Endothelial cell of umbilical vein (primary cell): ENCODE measurements at regions of chr2 and their contacts with region 1.

Region 1: DNA sequence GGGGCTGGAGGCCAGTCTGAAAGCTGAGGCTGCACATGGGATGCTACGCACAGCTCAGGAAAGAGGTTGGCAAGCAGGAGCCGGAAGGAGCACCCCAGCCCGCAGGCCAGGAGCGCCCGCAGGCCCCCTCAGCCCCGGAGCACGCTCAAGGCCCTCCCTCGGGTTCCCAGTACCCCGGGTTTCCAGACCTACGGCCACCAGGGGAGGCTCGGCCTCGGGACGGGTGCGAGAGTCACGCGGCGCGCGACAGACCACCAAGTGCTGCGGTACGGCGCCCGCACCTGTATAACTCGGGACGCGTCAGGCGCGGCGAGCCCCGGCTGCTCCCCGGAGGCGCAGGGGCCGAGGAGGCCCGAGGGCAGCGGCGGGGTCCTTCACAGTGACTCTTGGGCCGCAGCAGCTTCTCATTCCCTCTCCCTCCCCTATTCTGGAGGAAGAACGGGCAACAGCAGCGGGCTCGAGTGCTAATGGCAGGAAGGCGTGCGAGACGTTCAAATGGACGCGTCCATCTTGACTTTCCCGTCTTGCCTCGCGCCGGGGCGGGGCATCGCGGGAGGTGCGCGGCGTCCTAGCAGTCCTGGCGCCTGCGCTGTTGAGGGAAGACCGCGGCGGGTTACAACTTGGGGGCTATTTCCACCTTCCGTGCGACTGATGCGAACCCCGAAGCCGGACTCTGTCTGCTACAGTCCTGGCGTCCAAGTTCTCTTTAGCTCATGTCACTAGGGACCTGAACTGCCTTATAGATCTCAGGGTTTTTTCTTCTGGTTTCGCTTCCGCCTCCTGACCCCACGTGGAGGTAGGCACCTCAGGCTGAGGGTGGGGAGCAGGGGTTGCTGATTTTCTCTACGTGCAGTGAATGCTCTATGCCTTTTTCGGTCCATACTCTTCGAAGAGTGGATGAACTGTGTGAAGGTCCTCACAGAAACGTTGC is at the start of gene ANAPC1:
- DNase-seq: peak; percentile 87
- H3K4me3 ChIP-seq: peak within 1 kb of the TSS; percentile 90 to 97 (median 96)
- H3K27ac ChIP-seq: peak within 1 kb of the TSS; percentile 66
- H3K4me1 ChIP-seq: peaks cover 7% of the 10 kb centered on the region
- H3K27me3 ChIP-seq: no peaks in the 10 kb centered on the region
- CTCF ChIP-seq: no peak
- POLR2A ChIP-seq: peak; percentile 96
- total RNA-seq, gene ANAPC1: 58.3 and 61.5 TPM in 2 replicates

Region 2: DNA sequence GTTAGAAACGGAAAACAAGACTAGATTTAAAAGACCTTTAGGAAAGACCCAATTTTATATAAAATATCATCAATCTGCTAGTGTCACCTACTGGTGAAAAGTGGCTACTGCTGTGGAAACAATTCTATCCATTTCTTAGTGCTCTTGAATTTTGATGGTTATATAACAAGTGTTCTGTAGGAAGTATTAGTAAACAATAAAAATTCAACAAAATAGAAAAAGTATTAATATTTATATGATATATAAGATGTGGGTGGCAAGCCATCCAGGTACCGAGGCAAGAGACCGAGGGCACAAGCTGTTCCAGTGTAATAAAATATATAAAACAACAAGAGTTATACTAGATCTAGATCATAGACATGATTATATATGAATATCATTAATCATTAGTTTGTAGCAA is 165.0 kb after region 1 on chr2:
- CTCF ChIA-PET with region 1: interaction called, 85 read pairs
- POLR2A ChIA-PET with region 1: no interaction called
- dilution Hi-C with region 1: no loop called
- intact Hi-C with region 1: loop called (anchors 1 kb)
- DNase-seq: peak; percentile 84
- H3K4me3 ChIP-seq: no peak overlapping the region
- H3K27ac ChIP-seq: no peak overlapping the region
- H3K4me1 ChIP-seq: peaks cover 5% of the 10 kb centered on the region
- H3K27me3 ChIP-seq: peaks cover 0 to 1% of the 10 kb centered on the region in 2 experiments
- CTCF ChIP-seq: peak; percentile 48 to 69
- POLR2A ChIP-seq: no peak

Region 3: DNA sequence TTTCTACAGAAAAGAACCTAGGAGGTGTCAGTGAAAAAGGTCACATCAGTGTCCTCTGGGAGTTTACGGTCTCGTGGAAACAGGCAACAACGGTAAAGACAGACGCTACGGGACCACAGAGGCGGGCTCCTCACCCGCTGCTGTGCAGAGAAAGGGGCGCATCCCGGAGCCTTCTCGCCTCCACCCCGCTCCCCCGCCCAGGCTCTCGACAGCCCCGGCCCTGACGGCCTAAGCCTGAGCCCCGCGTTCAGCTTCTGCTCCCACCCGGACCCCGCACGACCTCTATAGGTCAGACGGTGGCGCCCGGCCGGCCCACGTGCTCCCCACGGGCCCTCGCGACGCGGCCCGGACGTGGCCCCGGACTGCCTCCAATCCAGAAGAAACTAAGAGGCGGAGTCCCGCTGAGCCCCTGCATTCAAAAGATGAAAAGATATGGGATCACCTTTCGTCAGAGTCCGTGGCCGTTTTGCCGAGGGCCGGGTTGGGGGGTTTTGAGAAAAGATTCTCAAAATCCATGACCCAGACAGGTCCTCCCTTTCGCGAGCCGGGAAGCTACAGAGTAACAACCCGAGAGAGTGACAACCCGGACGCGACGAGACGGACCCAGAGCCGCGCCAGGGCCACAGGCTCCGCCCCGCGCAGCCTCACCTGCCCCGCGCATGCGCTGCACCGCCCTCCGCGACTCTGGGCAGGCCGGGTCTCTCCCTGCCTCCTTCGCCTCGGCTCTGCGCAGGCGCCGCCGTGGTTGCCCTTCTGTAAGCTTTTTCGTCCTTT is 370.7 kb after region 1 on chr2 and contains the start of gene ZC3H8:
- CTCF ChIA-PET with region 1: no interaction called
- POLR2A ChIA-PET with region 1: no interaction called
- dilution Hi-C with region 1: no loop called
- intact Hi-C with region 1: loop called (anchors 5 kb)
- DNase-seq: peak; percentile 89
- H3K4me3 ChIP-seq: peak within 1 kb of the TSS; percentile 49 to 89 (median 82)
- H3K27ac ChIP-seq: peak within 1 kb of the TSS; percentile 65
- H3K4me1 ChIP-seq: peaks cover 13% of the 10 kb centered on the region
- H3K27me3 ChIP-seq: no peaks in the 10 kb centered on the region
- CTCF ChIP-seq: no peak
- POLR2A ChIP-seq: peak; percentile 90
- total RNA-seq, gene ZC3H8: 7.1 and 7.8 TPM in 2 replicates

Region 4: DNA sequence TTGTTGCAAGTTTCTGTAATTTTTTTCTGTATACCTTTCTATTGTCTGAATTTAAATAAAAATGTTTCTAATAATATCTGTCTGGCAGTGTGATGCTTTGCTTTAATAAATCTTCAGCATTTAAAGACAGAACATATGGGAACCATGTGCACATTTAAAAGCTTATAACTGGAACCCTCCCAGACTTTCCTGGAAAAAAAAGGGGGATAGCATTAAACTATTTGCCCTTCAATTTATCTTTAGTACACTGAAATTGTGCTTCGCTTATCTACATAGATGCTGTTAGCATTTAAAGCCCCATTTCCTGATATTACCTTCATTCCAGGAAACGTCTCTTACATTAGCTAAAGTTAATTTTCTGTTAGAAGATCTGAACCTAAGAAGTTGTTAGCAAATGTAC is 456.1 kb after region 1 on chr2:
- CTCF ChIA-PET with region 1: no interaction called
- POLR2A ChIA-PET with region 1: no interaction called
- dilution Hi-C with region 1: no loop called
- intact Hi-C with region 1: loop called (anchors 10 kb)
- DNase-seq: no peak
- H3K4me3 ChIP-seq: no peak overlapping the region
- H3K27ac ChIP-seq: no peak overlapping the region
- H3K4me1 ChIP-seq: no peaks in the 10 kb centered on the region
- H3K27me3 ChIP-seq: no peaks in the 10 kb centered on the region
- CTCF ChIP-seq: no peak
- POLR2A ChIP-seq: no peak